ENCODE measurements at regions of chr4 and their contacts with region 1.

Region 1: GRCh38 chr4:7802093-7802726 is 137.5 kb downstream of the AFAP1 start:
- DNase-seq: no peak
- H3K4me3 ChIP-seq: no peak overlapping the region
- CTCF ChIP-seq: peak; percentile 93

Region 2: DNA sequence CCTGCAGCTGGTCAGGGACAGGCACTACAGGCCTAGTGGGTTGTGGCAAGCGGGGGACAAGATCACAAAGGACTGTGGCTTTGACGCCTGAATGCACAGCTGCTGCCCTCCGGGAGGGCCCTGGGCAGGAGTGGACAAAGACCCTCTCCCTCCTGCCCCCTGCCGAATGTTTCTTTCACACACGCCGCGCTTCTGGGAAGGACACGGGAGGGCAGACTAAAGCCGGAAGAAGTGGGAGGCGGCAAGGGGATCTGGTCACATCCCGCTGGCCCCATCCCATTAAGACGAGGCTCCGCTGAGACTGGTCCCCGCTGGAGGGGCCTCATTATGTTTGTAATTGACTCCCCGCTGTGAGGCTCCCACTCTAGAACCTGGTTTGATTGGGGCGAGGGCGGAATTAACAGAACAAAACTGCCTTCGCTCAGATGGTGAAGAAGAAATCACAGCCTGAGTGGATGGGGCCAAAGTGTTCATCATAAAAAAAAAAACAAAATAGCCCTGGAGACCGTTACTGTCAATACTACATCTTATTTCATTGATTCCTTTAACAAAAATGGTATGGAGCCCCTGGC is 329.7 kb before region 1 on chr4:
- CTCF ChIA-PET with region 1: no interaction called
- POLR2A ChIA-PET with region 1: no interaction called
- DNase-seq: no peak
- H3K4me3 ChIP-seq: no peak overlapping the region
- CTCF ChIP-seq: no peak

Region 3: GRCh38 chr4:7827991-7828720 is 25.9 kb after region 1 on chr4:
- CTCF ChIA-PET with region 1: interaction called, 21 read pairs
- POLR2A ChIA-PET with region 1: interaction called, 6 read pairs
- DNase-seq: peak; percentile 99
- H3K4me3 ChIP-seq: peak overlapping the region; percentile 40
- CTCF ChIP-seq: no peak

Region 4: GRCh38 chr4:7850489-7850888 is 48.3 kb after region 1 on chr4:
- CTCF ChIA-PET with region 1: interaction called, 28 read pairs
- POLR2A ChIA-PET with region 1: no interaction called
- DNase-seq: no peak
- H3K4me3 ChIP-seq: no peak overlapping the region
- CTCF ChIP-seq: no peak

Region 5: GRCh38 chr4:7929118-7929951 is 127.1 kb after region 1 on chr4:
- CTCF ChIA-PET with region 1: interaction called, 33 read pairs
- POLR2A ChIA-PET with region 1: no interaction called
- DNase-seq: no peak
- H3K4me3 ChIP-seq: no peak overlapping the region
- CTCF ChIP-seq: no peak

Region 6: DNA sequence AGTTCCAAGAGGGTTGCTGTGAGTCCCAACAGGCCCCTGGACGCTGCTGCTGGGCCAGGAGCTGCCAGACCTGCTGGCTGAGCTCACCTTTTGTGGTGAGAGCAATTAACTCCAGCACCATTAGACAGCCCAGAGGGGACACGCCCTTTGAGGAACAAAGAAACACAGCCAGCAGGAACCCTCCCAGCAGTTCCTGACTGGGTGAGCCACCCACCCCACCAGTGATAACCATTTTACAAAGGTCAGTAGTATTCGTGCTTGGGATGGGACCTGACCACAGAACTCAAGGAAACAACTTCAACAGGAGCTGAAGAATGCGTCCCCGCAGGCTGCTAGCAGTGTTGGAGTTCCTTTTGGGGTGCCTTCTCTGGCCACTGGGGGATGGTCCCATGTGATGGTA is 176.3 kb after region 1 on chr4:
- CTCF ChIA-PET with region 1: interaction called, 193 read pairs
- POLR2A ChIA-PET with region 1: interaction called, 3 read pairs
- DNase-seq: no peak
- H3K4me3 ChIP-seq: no peak overlapping the region
- CTCF ChIP-seq: no peak